ENCODE measurements at regions of chr3 and their contacts with region 1.

Region 1: GRCh38 chr3:150721285-150722130 is 17.8 kb upstream of the ERICH6 start:
- DNase-seq: no peak
- H3K4me3 ChIP-seq: peak overlapping the region; percentile 16 to 19
- H3K27ac ChIP-seq: peak overlapping the region; percentile 58 to 63
- H3K4me1 ChIP-seq: no peaks in the 10 kb centered on the region
- H3K27me3 ChIP-seq: no peaks in the 10 kb centered on the region
- CTCF ChIP-seq: peak; percentile 82 to 91 (median 86)
- POLR2A ChIP-seq: no peak

Region 2: DNA sequence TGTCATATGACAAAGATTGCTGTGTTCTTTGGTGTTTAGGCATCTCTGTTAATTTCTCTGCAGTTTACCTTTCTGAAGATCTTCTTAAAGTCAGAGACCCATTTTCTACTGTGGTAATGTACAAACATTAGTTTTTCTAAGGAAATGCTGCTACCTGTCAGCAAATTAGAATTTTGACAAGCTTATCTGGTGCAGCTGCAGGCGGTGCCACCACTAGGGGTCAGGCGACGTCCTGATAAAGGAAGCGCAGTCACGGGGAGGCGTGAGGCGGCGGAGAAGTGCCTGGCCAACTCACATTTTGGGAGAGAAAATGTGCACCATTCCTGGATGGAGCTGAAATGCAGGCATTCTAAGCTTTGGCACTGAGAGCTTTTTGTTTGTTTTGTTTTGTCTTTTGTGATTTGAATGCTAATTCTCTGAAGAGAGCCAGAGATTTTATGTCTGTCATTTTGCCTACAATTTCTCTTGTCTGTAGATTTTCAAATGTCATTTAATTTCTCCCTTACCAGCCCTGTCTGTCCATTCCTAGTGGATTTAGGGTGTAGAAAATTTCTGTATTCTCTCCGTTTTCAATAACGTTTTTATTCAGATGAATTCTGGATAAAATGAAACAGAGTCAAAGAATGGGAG is 66.3 kb after region 1 on chr3:
- intact Hi-C with region 1: loop called (anchors 10 kb)
- DNase-seq: peak; percentile 81 to 88
- H3K4me3 ChIP-seq: no peak overlapping the region
- H3K27ac ChIP-seq: no peak overlapping the region
- H3K4me1 ChIP-seq: no peaks in the 10 kb centered on the region
- H3K27me3 ChIP-seq: no peaks in the 10 kb centered on the region
- CTCF ChIP-seq: peak; percentile 84 to 94 (median 90)
- POLR2A ChIP-seq: no peak

Region 3: GRCh38 chr3:151146071-151146730 is 424.7 kb after region 1 on chr3:
- intact Hi-C with region 1: loop called (anchors 5 kb)
- DNase-seq: peak; percentile 60 to 64
- H3K4me3 ChIP-seq: no peak overlapping the region
- H3K27ac ChIP-seq: no peak overlapping the region
- H3K4me1 ChIP-seq: peaks cover 0 to 5% of the 10 kb centered on the region in 2 donors
- H3K27me3 ChIP-seq: no peaks in the 10 kb centered on the region
- CTCF ChIP-seq: peak; percentile 74 to 88 (median 80)
- POLR2A ChIP-seq: no peak

Measured in uterus (tissue), 4 donors.